ENCODE measurements at regions of chr3 and their contacts with region 1.

Region 1: DNA sequence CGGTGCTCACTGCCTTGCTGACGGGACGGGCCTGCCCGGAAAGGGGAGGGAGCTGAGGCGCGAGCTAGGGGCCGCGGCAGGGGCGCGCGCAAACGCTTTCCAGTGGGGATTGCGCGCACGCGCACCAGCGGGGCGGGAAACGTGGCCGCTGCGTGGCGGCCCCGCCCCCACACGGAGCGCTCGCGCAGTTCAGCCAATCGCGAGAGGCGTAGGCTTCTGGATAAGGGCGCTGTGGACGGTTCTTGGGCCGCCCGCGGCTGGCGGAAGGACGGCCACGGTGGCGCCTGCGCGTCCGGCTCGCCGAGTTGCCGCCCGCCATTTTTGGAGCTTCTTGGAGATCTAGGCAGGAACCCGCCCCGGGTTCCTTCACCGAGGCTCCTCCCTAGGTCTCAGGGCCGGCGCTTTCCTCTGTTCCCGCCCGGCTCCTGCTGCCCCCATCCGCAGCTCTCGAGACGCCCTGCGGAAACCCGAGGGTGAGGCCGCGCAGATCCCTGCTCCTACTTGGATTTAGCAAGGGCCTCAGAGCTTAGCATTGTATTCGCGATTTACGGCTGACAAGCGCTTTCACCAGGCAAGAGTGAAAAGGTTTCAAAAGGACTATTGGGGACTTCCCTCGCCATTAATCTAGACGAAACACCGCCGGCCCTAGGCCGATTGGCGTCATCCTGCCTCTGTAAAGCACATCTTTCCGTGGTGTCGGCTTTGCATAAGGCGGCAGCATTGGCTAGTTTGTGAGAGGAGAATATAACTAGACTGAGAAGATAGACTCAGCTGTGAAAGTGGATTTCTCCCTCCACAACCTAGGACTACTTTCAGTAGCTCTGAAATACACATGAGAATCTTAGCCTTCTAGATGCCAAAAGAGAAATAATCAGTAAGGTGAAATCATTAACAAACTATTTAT is 496 bp upstream of the STAG1 start:
- DNase-seq: peak; percentile 99
- ATAC-seq: peak; percentile 90
- H3K4me3 Mint-ChIP-seq: peak overlapping the region; percentile 73
- H3K27ac Mint-ChIP-seq: peak overlapping the region; percentile 95
- H3K4me1 Mint-ChIP-seq: peaks cover 42% of the 10 kb centered on the region
- H3K27me3 Mint-ChIP-seq: no peaks in the 10 kb centered on the region
- CTCF ChIP-seq: no peak

Region 2: DNA sequence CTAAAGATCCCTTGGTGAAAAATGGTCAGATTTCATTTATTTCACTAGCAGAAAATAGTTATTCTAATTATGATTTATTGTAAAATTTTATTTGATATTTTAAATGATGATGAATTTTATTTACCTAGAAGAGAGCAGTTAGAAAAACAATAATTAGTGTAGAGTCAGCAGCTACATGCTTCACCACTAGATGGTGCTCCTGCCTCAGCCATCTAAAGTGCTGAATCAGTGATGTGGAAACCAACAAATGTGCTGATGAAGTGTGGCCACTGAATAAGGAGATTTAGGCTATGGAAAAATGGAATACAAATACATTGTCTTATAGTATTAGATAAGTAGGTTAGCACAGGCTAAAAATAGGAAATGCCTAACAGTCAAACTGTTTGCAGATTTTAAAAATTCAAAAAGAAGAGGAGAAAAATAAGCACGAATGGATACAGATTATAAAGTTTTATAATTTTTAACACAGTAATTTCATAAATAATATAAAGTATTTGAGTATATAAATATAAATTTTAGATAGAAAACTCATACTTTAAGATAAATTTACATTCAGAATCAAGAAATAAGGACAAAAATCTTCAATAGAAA is 677.4 kb before region 1 on chr3:
- CTCF ChIA-PET with region 1: interaction called, 13 read pairs
- POLR2A ChIA-PET with region 1: no interaction called
- DNase-seq: peak; percentile 72
- ATAC-seq: peak; percentile 52; the same call in 1 of the 2 replicates
- H3K4me3 Mint-ChIP-seq: no peak overlapping the region
- H3K27ac Mint-ChIP-seq: peak overlapping the region; percentile 90; the same call in 1 of the 2 replicates
- H3K4me1 Mint-ChIP-seq: peaks cover 5% of the 10 kb centered on the region
- H3K27me3 Mint-ChIP-seq: no peaks in the 10 kb centered on the region
- CTCF ChIP-seq: peak; percentile 79

Region 3: GRCh38 chr3:136351905-136352304 is 400.8 kb before region 1 on chr3:
- CTCF ChIA-PET with region 1: interaction called, 11 read pairs
- POLR2A ChIA-PET with region 1: no interaction called
- DNase-seq: no peak
- ATAC-seq: no peak
- H3K4me3 Mint-ChIP-seq: no peak overlapping the region
- H3K27ac Mint-ChIP-seq: no peak overlapping the region
- H3K4me1 Mint-ChIP-seq: peaks cover 13% of the 10 kb centered on the region
- H3K27me3 Mint-ChIP-seq: no peaks in the 10 kb centered on the region
- CTCF ChIP-seq: no peak

Region 4: DNA sequence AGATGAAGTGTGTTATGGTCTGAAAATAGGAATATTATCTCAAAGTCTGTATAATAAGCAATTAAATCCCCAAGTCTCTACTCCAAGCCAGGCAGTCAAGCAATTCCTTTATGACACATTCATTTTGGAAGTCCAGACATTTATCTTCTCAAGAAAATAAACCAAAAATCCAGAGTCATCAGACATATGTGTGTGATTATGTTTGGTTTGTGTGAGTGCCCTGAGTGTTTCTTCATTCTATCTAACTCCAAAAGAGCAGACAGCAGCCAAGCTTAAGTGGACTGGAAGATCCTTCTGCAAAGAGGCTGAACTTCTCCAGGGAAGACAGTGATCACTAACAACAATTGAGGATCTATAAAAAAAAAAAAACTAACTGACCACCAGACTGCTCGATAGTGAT is 240.3 kb before region 1 on chr3:
- CTCF ChIA-PET with region 1: interaction called, 12 read pairs
- POLR2A ChIA-PET with region 1: no interaction called
- DNase-seq: no peak
- ATAC-seq: no peak
- H3K4me3 Mint-ChIP-seq: no peak overlapping the region
- H3K27ac Mint-ChIP-seq: no peak overlapping the region
- H3K4me1 Mint-ChIP-seq: peaks cover 7% of the 10 kb centered on the region
- H3K27me3 Mint-ChIP-seq: no peaks in the 10 kb centered on the region
- CTCF ChIP-seq: no peak

Region 5: GRCh38 chr3:136741063-136741462 is 11.6 kb before region 1 on chr3:
- CTCF ChIA-PET with region 1: interaction called, 17 read pairs
- POLR2A ChIA-PET with region 1: interaction called, 4 read pairs
- DNase-seq: no peak
- ATAC-seq: no peak
- H3K4me3 Mint-ChIP-seq: no peak overlapping the region
- H3K27ac Mint-ChIP-seq: no peak overlapping the region
- H3K4me1 Mint-ChIP-seq: peaks cover 25% of the 10 kb centered on the region
- H3K27me3 Mint-ChIP-seq: no peaks in the 10 kb centered on the region
- CTCF ChIP-seq: no peak

Region 6: GRCh38 chr3:137013955-137014688 is 261.4 kb after region 1 on chr3:
- CTCF ChIA-PET with region 1: interaction called, 81 read pairs
- POLR2A ChIA-PET with region 1: interaction called, 7 read pairs
- DNase-seq: peak; percentile 90
- ATAC-seq: peak; percentile 87
- H3K4me3 Mint-ChIP-seq: peak overlapping the region; percentile 61
- H3K27ac Mint-ChIP-seq: no peak overlapping the region
- H3K4me1 Mint-ChIP-seq: peaks cover 9% of the 10 kb centered on the region
- H3K27me3 Mint-ChIP-seq: no peaks in the 10 kb centered on the region; the same call in 1 of the 2 replicates
- CTCF ChIP-seq: peak; percentile 96